ENCODE measurements at regions of chr5 and their contacts with region 1.

Region 1: DNA sequence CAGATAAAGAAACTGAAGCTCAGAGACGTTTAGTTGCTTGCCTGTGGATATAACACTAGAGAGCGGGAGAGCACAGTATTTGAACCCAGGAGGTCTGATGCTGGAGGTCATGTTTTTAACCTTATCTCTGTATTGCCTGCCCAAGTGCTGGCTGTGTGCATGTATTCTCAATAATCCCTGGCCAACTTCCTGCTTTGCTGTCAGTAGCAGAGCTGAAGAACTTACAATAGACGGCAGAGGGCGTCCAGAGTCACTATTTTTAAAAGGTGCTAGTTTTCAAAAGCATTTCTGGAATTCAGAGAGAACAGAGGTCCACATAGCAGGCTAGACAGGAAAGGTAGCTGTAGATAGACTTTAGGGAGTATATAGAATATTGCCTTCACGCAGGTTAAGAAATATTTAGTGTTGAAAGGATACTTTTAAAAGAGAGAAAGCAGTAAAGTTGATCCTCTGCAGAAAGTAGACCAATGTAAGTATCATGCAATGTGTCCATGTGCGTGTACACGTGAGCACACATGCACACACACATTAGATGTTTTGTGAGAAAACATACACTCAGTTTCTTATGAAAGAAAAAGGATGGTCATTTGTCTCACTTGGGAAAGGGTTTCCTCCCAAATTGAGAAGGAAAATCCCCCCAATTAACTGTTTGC is 46.3 kb downstream of the PTCD2 start:
- DNase-seq: peak; percentile 72 to 76
- H3K4me3 ChIP-seq: no peak overlapping the region
- H3K27ac ChIP-seq: 0 out of 2 replicates have a peak overlapping the region, but pooled peaks have one; percentile 6
- H3K4me1 ChIP-seq: peaks cover 24% of the 10 kb centered on the region
- H3K27me3 ChIP-seq: no peaks in the 10 kb centered on the region
- CTCF ChIP-seq: peak; percentile 84

Region 2: DNA sequence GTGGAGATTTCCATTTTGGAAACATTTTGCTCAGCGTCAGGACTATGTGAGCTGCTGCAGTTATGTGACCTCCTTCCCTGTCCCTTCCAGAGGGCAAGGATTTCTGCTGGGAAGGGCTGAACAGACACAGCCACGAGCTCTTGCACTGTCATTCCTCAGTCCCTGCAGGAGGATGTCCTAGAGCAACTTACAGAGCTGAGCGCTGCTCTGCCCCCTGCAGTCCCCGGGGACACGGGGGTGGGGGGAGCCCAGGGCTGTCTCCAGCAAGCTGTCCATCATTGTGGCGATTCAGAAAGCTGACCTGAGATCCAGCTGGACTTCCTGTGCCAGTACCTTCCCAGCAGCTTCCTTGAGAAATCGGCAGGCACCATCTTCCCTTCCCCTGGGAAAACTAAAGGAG is 287.2 kb before region 1 on chr5:
- CTCF ChIA-PET with region 1: no interaction called
- POLR2A ChIA-PET with region 1: no interaction called
- intact Hi-C with region 1: no loop called
- DNase-seq: peak in 1 of 2 experiments; percentile 26
- H3K4me3 ChIP-seq: no peak overlapping the region
- H3K27ac ChIP-seq: no peak overlapping the region
- H3K4me1 ChIP-seq: no peaks in the 10 kb centered on the region
- H3K27me3 ChIP-seq: no peaks in the 10 kb centered on the region
- CTCF ChIP-seq: no peak

Region 3: GRCh38 chr5:72319976-72320752 is 46.3 kb before region 1 on chr5 and contains the starts of genes MRPS27 and PTCD2:
- CTCF ChIA-PET with region 1: interaction called, 7 read pairs
- POLR2A ChIA-PET with region 1: interaction called, 12 read pairs
- intact Hi-C with region 1: no loop called
- DNase-seq: peak; percentile 92 to 93
- H3K4me3 ChIP-seq: peak within 1 kb of the TSS; percentile 57
- H3K27ac ChIP-seq: peak within 1 kb of the TSS; percentile 57
- H3K4me1 ChIP-seq: peaks cover 35% of the 10 kb centered on the region
- H3K27me3 ChIP-seq: no peaks in the 10 kb centered on the region
- CTCF ChIP-seq: no peak; the same call in 1 of the 2 replicates
- total RNA-seq, gene MRPS27: 71.0 and 73.1 TPM in 2 replicates
- total RNA-seq, gene PTCD2: 13.4 and 15.5 TPM in 2 replicates

Region 4: DNA sequence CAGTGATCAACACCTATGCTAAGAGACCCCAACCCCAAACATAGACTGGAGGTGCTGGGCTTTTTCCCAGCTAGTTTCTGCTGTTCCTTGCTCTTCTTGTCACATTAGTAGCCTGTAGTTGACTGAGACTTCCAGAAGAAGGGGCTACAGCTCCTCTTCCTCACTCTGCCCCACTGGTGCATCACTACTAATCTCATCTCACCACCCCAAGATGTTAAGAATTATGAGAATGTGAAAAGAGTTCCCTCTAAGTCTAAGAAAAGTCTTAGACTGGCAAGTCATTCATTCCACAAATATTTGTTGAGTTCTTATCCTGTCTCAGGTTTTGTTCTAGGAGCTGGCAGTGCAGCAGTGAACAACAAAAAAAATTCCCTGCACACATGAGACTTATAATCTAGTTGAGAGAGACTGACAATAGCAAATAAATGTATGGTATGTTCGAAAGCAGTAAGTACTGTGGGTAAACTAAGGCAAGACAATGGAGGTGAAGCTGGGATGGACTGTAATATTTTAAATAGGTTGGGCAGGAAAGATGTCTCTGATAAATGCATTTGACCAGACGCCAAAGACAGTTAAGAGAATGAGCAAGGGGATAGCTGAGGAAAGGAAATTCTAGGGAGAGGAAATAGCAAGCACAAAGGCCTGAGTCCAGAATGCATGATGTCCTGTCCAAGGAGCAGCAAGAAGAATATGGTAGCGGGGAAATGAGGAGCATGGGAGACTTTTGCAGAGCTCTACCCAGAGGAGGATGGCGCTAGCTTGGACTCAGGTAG is 46.0 kb after region 1 on chr5:
- CTCF ChIA-PET with region 1: no interaction called
- POLR2A ChIA-PET with region 1: no interaction called
- intact Hi-C with region 1: loop called (anchors 1 kb)
- DNase-seq: no peak
- H3K4me3 ChIP-seq: no peak overlapping the region
- H3K27ac ChIP-seq: no peak overlapping the region
- H3K4me1 ChIP-seq: peaks cover 8% of the 10 kb centered on the region
- H3K27me3 ChIP-seq: no peaks in the 10 kb centered on the region
- CTCF ChIP-seq: no peak; the same call in 1 of the 2 replicates

Region 5: GRCh38 chr5:72467421-72468386 is 101.3 kb after region 1 on chr5:
- CTCF ChIA-PET with region 1: no interaction called
- POLR2A ChIA-PET with region 1: no interaction called
- intact Hi-C with region 1: loop called (anchors 1 kb)
- DNase-seq: peak; percentile 42 to 83
- H3K4me3 ChIP-seq: peak overlapping the region; percentile 38
- H3K27ac ChIP-seq: peak overlapping the region; percentile 99
- H3K4me1 ChIP-seq: peaks cover 78% of the 10 kb centered on the region
- H3K27me3 ChIP-seq: no peaks in the 10 kb centered on the region
- CTCF ChIP-seq: no peak

Region 6: DNA sequence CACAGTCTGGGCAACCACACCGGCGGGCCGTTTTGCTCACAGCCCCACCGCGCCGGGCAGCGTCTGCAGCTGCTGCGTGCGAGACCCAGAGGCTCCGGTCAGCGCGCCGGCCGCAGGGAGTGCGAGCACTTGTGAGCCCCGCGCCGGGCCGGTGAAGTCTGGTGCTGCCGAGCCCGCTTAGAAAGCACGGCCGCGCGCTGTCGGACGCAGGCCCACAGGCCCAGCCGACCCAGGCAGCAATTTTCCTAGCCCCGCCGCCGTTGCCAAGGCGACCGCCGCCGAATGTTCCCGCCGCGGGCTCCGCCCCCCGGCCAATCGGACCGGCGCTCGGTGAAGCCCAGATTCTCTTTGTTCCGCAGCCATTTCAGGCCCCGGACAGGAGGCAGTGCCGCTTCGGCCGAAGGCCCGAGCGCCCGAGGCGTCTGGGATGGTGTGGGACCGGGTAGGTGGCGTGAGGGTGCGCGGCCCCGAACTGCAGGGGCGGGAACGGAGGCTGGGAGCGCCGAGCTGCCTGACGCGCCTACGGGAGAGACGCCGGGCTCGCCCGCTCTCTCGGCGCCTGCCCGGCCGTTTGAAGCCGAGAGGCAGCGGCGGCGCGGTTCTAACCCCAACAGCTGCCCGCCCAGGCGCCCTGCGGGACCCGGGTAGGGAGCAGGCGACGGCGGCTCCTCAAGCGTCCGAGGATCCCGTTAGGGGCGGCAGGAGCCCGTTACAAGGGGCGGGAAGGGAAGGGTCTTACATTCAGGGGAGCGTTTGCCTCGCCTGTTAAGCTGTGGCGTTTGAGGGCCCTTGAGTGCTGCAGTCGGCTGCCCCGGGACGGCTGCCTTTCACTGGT is 450.1 kb after region 1 on chr5 and contains the start of gene TNPO1:
- CTCF ChIA-PET with region 1: interaction called, 5 read pairs
- POLR2A ChIA-PET with region 1: no interaction called
- intact Hi-C with region 1: loop called (anchors 2 kb)
- DNase-seq: peak; percentile 75 to 92
- H3K4me3 ChIP-seq: peak within 1 kb of the TSS; percentile 81
- H3K27ac ChIP-seq: peak within 1 kb of the TSS; percentile 75
- H3K4me1 ChIP-seq: peaks cover 34% of the 10 kb centered on the region
- H3K27me3 ChIP-seq: no peaks in the 10 kb centered on the region
- CTCF ChIP-seq: no peak
- total RNA-seq, gene TNPO1: 135 and 185 TPM in 2 replicates